ENCODE measurements at regions of chr2 and their contacts with region 1.

Region 1: GRCh38 chr2:10043906-10044601 is 704 bp downstream of the KLF11 start:
- DNase-seq: peak; percentile 99
- ATAC-seq: peak; percentile 78 to 82 (median 78)
- H3K4me3 ChIP-seq: peak overlapping the region; percentile 63
- H3K27ac ChIP-seq: peak overlapping the region; percentile 94
- H3K4me1 ChIP-seq: peaks cover 41% of the 10 kb centered on the region
- H3K27me3 ChIP-seq: no peaks in the 10 kb centered on the region
- CTCF ChIP-seq: no peak

Region 2: GRCh38 chr2:9799665-9800632 is 244.1 kb before region 1 on chr2:
- intact Hi-C with region 1: loop called in 1 of 2 experiments (anchors 5 kb)
- DNase-seq: peak; percentile 87 to 93
- ATAC-seq: peak; percentile 73 to 90 (median 79)
- H3K4me3 ChIP-seq: peak overlapping the region; percentile 4
- H3K27ac ChIP-seq: no peak overlapping the region
- H3K4me1 ChIP-seq: peaks cover 12% of the 10 kb centered on the region
- H3K27me3 ChIP-seq: no peaks in the 10 kb centered on the region
- CTCF ChIP-seq: peak; percentile 95

Region 3: DNA sequence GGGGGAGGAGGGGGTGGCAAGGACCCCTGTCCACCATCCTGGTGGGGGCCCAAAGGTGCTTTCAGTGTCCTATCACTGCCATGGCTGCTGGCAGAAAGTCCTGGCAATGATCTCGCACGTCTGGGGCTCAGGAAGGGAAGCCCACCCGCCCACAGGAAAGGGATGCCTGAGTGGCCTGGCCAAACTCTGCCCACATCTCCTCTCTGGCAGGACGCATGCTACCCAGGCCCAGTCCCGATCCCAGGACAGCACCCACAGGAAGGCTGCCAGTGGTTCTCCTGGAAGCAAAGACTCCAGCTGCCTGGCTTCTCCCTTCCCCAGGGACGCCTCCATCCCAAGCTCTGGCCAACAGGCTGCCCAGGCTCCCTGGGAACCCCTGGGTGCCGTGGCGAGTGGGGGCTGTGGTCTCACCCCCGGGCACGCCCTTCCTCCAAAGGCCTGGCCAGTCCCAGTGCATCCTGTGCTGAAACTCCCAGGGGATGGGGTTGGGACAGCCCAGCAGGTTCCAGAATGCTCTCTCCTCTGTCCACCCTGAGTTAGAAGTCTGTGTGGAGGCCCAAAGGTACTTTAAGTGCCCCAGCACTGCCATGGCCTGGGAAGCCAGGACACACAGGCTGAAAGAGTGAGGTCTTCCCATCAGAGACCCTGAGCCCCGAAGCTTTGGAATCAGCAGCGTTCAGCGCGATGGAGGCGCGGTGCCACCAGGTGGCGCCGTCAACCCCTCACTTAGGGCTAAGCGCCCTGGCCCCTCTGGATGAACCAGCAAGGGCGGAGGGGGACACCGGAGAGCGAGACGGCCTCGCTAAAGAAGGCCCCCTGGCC is 230.5 kb before region 1 on chr2:
- intact Hi-C with region 1: loop called in 1 of 2 experiments (anchors 10 kb)
- DNase-seq: peak; percentile 76 to 85
- ATAC-seq: peak; percentile 84 to 90 (median 85)
- H3K4me3 ChIP-seq: peak overlapping the region; percentile 42
- H3K27ac ChIP-seq: no peak overlapping the region
- H3K4me1 ChIP-seq: peaks cover 5% of the 10 kb centered on the region
- H3K27me3 ChIP-seq: no peaks in the 10 kb centered on the region
- CTCF ChIP-seq: peak; percentile 90

Region 4: GRCh38 chr2:9984217-9984739 is 59.8 kb before region 1 on chr2:
- intact Hi-C with region 1: loop called (anchors 2 kb)
- DNase-seq: no peak
- ATAC-seq: peak; percentile 66 to 85 (median 71)
- H3K4me3 ChIP-seq: no peak overlapping the region
- H3K27ac ChIP-seq: no peak overlapping the region
- H3K4me1 ChIP-seq: peaks cover 19% of the 10 kb centered on the region
- H3K27me3 ChIP-seq: no peaks in the 10 kb centered on the region
- CTCF ChIP-seq: peak; percentile 85

Measured in psoas muscle (tissue), 8 donors.